ENCODE measurements at regions of chr3 and their contacts with region 1.

Region 1: GRCh38 chr3:57555738-57556458 is at the start of gene PDE12:
- DNase-seq: peak; percentile 93
- total RNA-seq, gene PDE12: 14.7 TPM

Region 2: DNA sequence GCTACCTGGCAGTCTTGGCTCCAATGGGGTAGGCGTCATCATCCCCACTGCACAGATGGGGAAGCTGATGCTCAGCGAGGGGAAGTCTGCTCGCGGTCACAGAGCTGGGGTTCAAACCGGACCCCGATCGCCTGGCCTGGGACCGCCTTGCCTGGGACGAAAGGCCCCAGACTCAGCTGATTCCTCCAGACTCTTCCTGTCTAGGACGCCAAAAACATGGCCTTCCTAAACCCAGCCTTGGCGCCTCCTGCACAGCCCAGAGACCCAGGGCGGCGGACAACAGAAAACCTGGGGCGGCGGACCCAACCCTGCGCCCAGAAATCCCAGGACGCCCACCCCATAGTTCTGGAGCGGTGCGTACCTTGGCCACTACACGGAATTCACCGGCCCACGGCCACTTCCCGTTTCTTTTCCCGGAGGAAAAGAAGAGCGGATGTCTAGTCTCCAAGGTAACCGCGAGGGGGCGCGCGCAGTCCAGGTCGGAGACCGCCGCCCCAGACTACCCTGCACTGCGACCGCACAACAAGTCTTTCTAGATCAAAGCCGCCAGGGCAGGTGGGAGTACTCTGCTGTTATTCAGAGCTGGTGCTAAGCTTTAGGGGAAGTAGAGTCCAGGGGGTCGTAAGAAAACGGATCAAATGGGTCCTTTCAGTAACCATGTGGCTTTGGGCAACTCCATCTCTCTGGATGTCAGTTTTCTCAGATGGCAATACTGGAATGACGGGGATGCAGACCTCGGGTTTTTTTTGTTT is 385.9 kb before region 1 on chr3:
- intact Hi-C with region 1: loop called (anchors 10 kb)
- DNase-seq: peak; percentile 89

Region 3: GRCh38 chr3:57597122-57597923 is 41.4 kb after region 1 on chr3 and contains the start of gene ARF4:
- intact Hi-C with region 1: loop called (anchors 1 kb)
- DNase-seq: peak; percentile 99
- total RNA-seq, gene ARF4: 103 TPM

Region 4: DNA sequence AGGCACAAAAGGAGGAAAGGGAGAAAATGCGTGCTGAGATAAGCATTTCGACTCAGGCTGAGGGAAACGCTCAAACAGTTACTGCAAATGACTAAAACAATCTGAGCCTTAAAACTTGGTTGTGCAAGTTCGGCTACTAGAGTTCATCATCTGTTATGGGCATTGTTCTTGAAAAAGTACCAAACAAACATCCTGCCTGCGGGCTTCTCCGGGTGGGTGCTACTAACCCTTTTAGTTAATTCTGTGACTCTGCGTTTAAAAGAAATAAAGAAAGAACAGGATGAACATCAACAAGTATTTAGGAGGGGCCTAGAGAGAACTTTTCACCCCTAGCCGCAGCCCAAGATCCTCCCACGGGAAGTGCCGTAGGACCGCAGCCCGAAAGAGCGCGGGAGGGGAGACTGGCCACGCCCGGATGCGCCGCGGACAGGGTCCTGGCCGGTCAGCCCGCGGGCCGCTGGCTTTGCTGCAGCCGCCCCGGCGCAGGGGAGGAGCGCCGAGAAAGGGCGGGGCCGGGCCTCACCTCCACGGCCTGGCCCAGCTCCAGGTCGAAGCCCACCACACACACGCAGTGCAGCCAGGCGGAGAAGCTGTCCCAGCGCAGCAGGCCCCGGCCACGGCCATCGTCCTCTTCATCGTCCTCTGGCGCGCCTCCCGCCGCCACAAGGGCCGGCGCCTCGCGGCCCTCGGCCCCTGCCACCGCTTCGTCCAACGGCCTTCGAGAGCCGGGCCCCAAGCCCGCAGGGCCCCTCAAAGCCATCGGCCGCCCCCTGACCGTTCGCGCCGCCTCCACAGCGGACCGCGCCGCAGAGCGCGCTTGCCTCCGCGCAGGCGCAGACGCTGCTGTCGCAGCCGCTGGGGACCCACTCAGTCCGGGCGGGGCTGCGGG is 136.6 kb after region 1 on chr3 and contains the start of gene DENND6A:
- intact Hi-C with region 1: loop called (anchors 5 kb)
- DNase-seq: peak; percentile 98
- total RNA-seq, gene DENND6A: 22.1 TPM

Region 5: GRCh38 chr3:57755668-57756527 is 200.0 kb after region 1 on chr3 and contains the start of gene SLMAP:
- intact Hi-C with region 1: loop called (anchors 5 kb)
- DNase-seq: peak; percentile 100
- total RNA-seq, gene SLMAP: 578 TPM